HepG2 (cell line): ENCODE measurements at regions of chr3 and their contacts with region 1.

Region 1: GRCh38 chr3:72818092-72818773 is 30.0 kb downstream of the SHQ1 start:
- DNase-seq: no peak
- ATAC-seq: peak; percentile 47; the same call in 2 of the 3 replicates
- H3K4me3 ChIP-seq: no peak overlapping the region
- H3K27ac ChIP-seq: no peak overlapping the region
- H3K4me1 ChIP-seq: peaks cover 12% of the 10 kb centered on the region
- H3K27me3 ChIP-seq: no peaks in the 10 kb centered on the region
- CTCF ChIP-seq: peak; percentile 71
- EP300 ChIP-seq: no peak
- POLR2A ChIP-seq: no peak
- RAD21 ChIP-seq: peak; percentile 57

Region 2: GRCh38 chr3:71710906-71711494 is 1107.2 kb before region 1 on chr3:
- CTCF ChIA-PET with region 1: no interaction called
- POLR2A ChIA-PET with region 1: no interaction called
- in situ Hi-C with region 1: loop called (anchors 25 kb)
- intact Hi-C with region 1: no loop called
- DNase-seq: peak; percentile 29
- ATAC-seq: peak; percentile 80
- H3K4me3 ChIP-seq: no peak overlapping the region
- H3K27ac ChIP-seq: no peak overlapping the region
- H3K4me1 ChIP-seq: peaks cover 8% of the 10 kb centered on the region; the same call in 1 of the 2 replicates
- H3K27me3 ChIP-seq: peaks cover 0 to 7% of the 10 kb centered on the region in 2 experiments; a peak in 2 of 5 replicates
- CTCF ChIP-seq: peak; percentile 73
- EP300 ChIP-seq: no peak
- POLR2A ChIP-seq: no peak
- RAD21 ChIP-seq: no peak

Region 3: GRCh38 chr3:71926262-71926600 is 892.0 kb before region 1 on chr3:
- CTCF ChIA-PET with region 1: no interaction called
- POLR2A ChIA-PET with region 1: no interaction called
- in situ Hi-C with region 1: no loop called
- intact Hi-C with region 1: loop called (anchors 1 kb)
- DNase-seq: peak; percentile 39
- ATAC-seq: peak; percentile 71
- H3K4me3 ChIP-seq: no peak overlapping the region
- H3K27ac ChIP-seq: no peak overlapping the region
- H3K4me1 ChIP-seq: no peaks in the 10 kb centered on the region
- H3K27me3 ChIP-seq: peaks cover 0 to 4% of the 10 kb centered on the region in 2 experiments; a peak in 2 of 5 replicates
- CTCF ChIP-seq: peak; percentile 58
- EP300 ChIP-seq: no peak
- POLR2A ChIP-seq: no peak
- RAD21 ChIP-seq: no peak

Region 4: DNA sequence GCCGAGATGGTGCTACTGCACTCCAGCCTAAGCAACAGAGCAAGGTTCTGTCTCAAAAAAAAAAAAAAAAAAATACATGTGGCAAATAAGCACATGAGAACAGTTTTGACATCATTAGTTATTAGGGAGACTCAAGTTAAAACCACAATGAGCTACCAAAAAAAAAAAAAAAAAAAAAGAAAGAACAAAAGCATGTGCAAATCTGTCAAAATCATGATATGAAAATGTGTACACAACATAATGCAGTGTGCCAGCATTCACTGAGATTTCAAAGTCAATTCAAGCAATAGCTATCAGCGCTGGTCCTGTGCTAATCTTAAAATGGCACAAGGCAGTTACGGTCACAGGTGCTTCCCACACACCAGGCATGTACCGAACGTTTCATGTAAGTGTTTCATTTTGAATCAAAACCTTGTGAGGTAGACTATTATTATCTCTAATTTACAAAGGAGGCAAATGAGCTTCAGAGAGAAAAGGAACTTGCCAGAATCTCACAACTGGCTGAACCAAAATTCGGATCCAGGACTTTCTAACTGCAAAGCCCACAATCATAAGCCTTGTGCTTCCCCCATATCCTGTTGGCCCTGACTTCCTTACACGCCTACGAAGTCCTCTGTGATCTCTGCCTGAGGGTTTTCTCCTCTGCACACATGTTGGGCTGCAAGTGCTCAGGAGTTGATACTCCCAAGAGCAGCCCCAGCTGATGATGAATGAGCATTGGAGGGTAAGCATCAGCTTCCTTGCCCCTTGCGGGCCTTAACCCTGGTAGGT is 833.2 kb before region 1 on chr3:
- CTCF ChIA-PET with region 1: no interaction called
- POLR2A ChIA-PET with region 1: no interaction called
- in situ Hi-C with region 1: no loop called
- intact Hi-C with region 1: loop called (anchors 10 kb)
- DNase-seq: no peak
- ATAC-seq: no peak
- H3K4me3 ChIP-seq: no peak overlapping the region
- H3K27ac ChIP-seq: no peak overlapping the region
- H3K4me1 ChIP-seq: no peaks in the 10 kb centered on the region
- H3K27me3 ChIP-seq: peaks cover 0 to 3% of the 10 kb centered on the region in 2 experiments; a peak in 3 of 5 replicates
- CTCF ChIP-seq: no peak
- EP300 ChIP-seq: no peak
- POLR2A ChIP-seq: no peak
- RAD21 ChIP-seq: no peak

Region 5: GRCh38 chr3:72447059-72447946 is 370.9 kb before region 1 on chr3:
- CTCF ChIA-PET with region 1: no interaction called
- POLR2A ChIA-PET with region 1: no interaction called
- in situ Hi-C with region 1: no loop called
- intact Hi-C with region 1: loop called (anchors 2 kb)
- DNase-seq: peak; percentile 66
- ATAC-seq: peak; percentile 71
- H3K4me3 ChIP-seq: peak overlapping the region; percentile 92 to 94 (median 93); a peak in 4 of 6 replicates
- H3K27ac ChIP-seq: peak overlapping the region; percentile 84
- H3K4me1 ChIP-seq: peaks cover 64% of the 10 kb centered on the region
- H3K27me3 ChIP-seq: peaks cover 0 to 2% of the 10 kb centered on the region in 2 experiments; a peak in 1 of 5 replicates
- CTCF ChIP-seq: no peak
- EP300 ChIP-seq: no peak
- POLR2A ChIP-seq: no peak; a peak in 1 of 4 replicates
- RAD21 ChIP-seq: peak; percentile 75

Region 6: DNA sequence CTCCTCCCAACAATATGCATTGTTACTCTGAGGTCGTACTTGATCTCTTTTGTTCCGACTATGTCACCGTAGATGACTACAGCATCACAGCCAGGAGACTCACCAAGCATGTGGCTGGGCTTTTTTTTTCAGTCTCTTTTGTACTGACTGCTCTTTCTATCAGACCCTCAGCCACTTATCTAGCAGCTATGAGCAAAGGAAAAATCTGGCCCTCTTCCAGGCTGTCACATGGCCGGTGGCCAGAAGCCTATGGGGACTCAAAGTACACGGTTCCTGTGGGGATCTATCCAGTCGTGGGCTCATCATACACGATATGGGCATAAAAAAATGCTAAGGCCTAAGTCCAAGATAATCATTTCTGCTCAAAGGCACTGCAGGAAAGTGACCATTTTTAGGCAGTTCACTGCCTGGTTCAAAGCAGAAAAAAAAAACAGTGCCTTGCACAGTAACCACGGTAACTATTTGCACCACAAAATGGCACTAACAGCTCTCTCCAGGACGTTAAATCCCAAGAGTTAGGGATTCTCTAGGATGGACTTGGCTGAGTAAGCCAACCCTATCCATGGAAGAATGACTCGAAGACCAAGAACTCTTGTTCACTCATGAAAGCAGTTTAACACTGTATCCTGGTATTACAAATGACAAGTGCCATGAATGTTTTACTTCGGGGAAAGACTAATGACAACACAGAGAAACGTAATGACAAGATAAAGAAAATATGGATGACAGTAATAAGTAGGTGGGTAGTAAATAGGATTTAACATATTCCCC is 20.3 kb before region 1 on chr3:
- CTCF ChIA-PET with region 1: no interaction called
- POLR2A ChIA-PET with region 1: no interaction called
- in situ Hi-C with region 1: no loop called
- intact Hi-C with region 1: no loop called
- DNase-seq: peak; percentile 5
- ATAC-seq: no peak
- H3K4me3 ChIP-seq: no peak overlapping the region
- H3K27ac ChIP-seq: no peak overlapping the region
- H3K4me1 ChIP-seq: no peaks in the 10 kb centered on the region; the same call in 1 of the 2 replicates
- H3K27me3 ChIP-seq: no peaks in the 10 kb centered on the region
- CTCF ChIP-seq: no peak
- EP300 ChIP-seq: no peak
- POLR2A ChIP-seq: no peak
- RAD21 ChIP-seq: no peak